ENCODE measurements at regions of chr17 and their contacts with region 1.

Region 1: GRCh38 chr17:5896215-5896614 is 174.0 kb upstream of the WSCD1 start:
- DNase-seq: no peak
- ATAC-seq: no peak
- H3K4me3 Mint-ChIP-seq: no peak overlapping the region
- H3K27ac Mint-ChIP-seq: no peak overlapping the region
- H3K4me1 Mint-ChIP-seq: no peaks in the 10 kb centered on the region
- H3K27me3 Mint-ChIP-seq: peaks cover 5% of the 10 kb centered on the region
- CTCF ChIP-seq: no peak

Region 2: DNA sequence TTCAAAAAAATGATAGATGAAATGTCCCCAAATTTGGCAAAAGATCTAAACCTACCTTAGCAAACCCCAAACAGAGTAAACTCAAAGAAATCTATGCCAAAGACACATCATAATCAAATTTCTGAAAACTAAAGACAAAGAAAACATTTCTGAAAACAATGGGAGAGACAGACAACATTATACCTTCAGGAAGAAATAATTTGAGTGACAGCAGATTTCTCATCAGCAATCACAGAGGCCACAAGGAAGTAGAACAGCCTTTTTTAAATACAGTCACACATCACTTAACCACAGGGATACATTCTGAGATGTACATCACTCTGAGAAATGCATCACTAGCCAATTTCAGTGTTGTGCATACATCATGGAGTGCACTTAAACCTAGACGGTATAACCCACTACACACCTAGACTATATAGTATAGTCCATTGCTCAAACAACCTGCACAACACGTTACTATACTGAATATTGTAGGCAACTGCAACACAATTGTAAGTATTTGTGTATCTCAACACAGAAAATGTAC is 1074.7 kb after region 1 on chr17:
- CTCF ChIA-PET with region 1: no interaction called
- POLR2A ChIA-PET with region 1: interaction called, 12 read pairs
- intact Hi-C with region 1: no loop called
- DNase-seq: no peak
- ATAC-seq: no peak
- H3K4me3 Mint-ChIP-seq: no peak overlapping the region
- H3K27ac Mint-ChIP-seq: no peak overlapping the region
- H3K4me1 Mint-ChIP-seq: no peaks in the 10 kb centered on the region
- H3K27me3 Mint-ChIP-seq: peaks cover 2% of the 10 kb centered on the region
- CTCF ChIP-seq: no peak